ENCODE measurements at regions of chr3 and their contacts with region 1.

Region 1: GRCh38 chr3:51995346-51996163 is at the start of gene RPL29:
- DNase-seq: peak; percentile 96
- ATAC-seq: peak; percentile 77
- H3K4me3 ChIP-seq: peak within 1 kb of the TSS; percentile 93
- H3K27ac ChIP-seq: peak within 1 kb of the TSS; percentile 58
- H3K4me1 ChIP-seq: peaks cover 22% of the 10 kb centered on the region
- H3K27me3 ChIP-seq: no peaks in the 10 kb centered on the region
- CTCF ChIP-seq: no peak
- total RNA-seq, gene RPL29: 1,539 and 1,807 TPM in 2 replicates

Region 2: GRCh38 chr3:51156147-51156546 is 839.4 kb before region 1 on chr3:
- CTCF ChIA-PET with region 1: no interaction called
- POLR2A ChIA-PET with region 1: no interaction called
- intact Hi-C with region 1: no loop called
- DNase-seq: no peak
- ATAC-seq: no peak
- H3K4me3 ChIP-seq: no peak overlapping the region
- H3K27ac ChIP-seq: no peak overlapping the region
- H3K4me1 ChIP-seq: no peaks in the 10 kb centered on the region
- H3K27me3 ChIP-seq: peaks cover 59% of the 10 kb centered on the region
- CTCF ChIP-seq: no peak

Region 3: GRCh38 chr3:51974963-51975851 is 20.3 kb before region 1 on chr3 and contains the start of gene ABHD14A:
- CTCF ChIA-PET with region 1: interaction called, 3 read pairs
- POLR2A ChIA-PET with region 1: interaction called, 5 read pairs
- intact Hi-C with region 1: loop called (anchors 2 kb)
- DNase-seq: peak; percentile 81
- ATAC-seq: peak; percentile 69
- H3K4me3 ChIP-seq: peak within 1 kb of the TSS; percentile 99
- H3K27ac ChIP-seq: peak within 1 kb of the TSS; percentile 32
- H3K4me1 ChIP-seq: peaks cover 23% of the 10 kb centered on the region
- H3K27me3 ChIP-seq: no peaks in the 10 kb centered on the region
- CTCF ChIP-seq: no peak
- total RNA-seq, gene ABHD14A: 22.1 and 23.4 TPM in 2 replicates

Region 4: GRCh38 chr3:51982782-51983577 is 12.6 kb before region 1 on chr3 and contains the start of gene ACY1:
- CTCF ChIA-PET with region 1: interaction called, 3 read pairs
- POLR2A ChIA-PET with region 1: interaction called, 6 read pairs
- intact Hi-C with region 1: loop called (anchors 1 kb)
- DNase-seq: peak; percentile 93
- ATAC-seq: peak; percentile 86
- H3K4me3 ChIP-seq: peak within 1 kb of the TSS; percentile 64
- H3K27ac ChIP-seq: peak within 1 kb of the TSS; percentile 79
- H3K4me1 ChIP-seq: peaks cover 20% of the 10 kb centered on the region
- H3K27me3 ChIP-seq: no peaks in the 10 kb centered on the region
- CTCF ChIP-seq: peak; percentile 27; the same call in 1 of the 2 replicates
- total RNA-seq, gene ACY1: 71.3 and 113 TPM in 2 replicates

Region 5: GRCh38 chr3:52022323-52023100 is 27.0 kb after region 1 on chr3:
- CTCF ChIA-PET with region 1: no interaction called
- POLR2A ChIA-PET with region 1: no interaction called
- intact Hi-C with region 1: no loop called
- DNase-seq: no peak
- ATAC-seq: no peak
- H3K4me3 ChIP-seq: no peak overlapping the region
- H3K27ac ChIP-seq: no peak overlapping the region
- H3K4me1 ChIP-seq: no peaks in the 10 kb centered on the region
- H3K27me3 ChIP-seq: no peaks in the 10 kb centered on the region
- CTCF ChIP-seq: no peak

Region 6: GRCh38 chr3:52109611-52110301 is 114.2 kb after region 1 on chr3:
- CTCF ChIA-PET with region 1: no interaction called
- POLR2A ChIA-PET with region 1: no interaction called
- intact Hi-C with region 1: no loop called
- DNase-seq: no peak
- ATAC-seq: no peak
- H3K4me3 ChIP-seq: no peak overlapping the region
- H3K27ac ChIP-seq: no peak overlapping the region
- H3K4me1 ChIP-seq: no peaks in the 10 kb centered on the region
- H3K27me3 ChIP-seq: no peaks in the 10 kb centered on the region
- CTCF ChIP-seq: no peak